HEK293 (cell line): ENCODE measurements at regions of chr9 and their contacts with region 1.

Region 1: DNA sequence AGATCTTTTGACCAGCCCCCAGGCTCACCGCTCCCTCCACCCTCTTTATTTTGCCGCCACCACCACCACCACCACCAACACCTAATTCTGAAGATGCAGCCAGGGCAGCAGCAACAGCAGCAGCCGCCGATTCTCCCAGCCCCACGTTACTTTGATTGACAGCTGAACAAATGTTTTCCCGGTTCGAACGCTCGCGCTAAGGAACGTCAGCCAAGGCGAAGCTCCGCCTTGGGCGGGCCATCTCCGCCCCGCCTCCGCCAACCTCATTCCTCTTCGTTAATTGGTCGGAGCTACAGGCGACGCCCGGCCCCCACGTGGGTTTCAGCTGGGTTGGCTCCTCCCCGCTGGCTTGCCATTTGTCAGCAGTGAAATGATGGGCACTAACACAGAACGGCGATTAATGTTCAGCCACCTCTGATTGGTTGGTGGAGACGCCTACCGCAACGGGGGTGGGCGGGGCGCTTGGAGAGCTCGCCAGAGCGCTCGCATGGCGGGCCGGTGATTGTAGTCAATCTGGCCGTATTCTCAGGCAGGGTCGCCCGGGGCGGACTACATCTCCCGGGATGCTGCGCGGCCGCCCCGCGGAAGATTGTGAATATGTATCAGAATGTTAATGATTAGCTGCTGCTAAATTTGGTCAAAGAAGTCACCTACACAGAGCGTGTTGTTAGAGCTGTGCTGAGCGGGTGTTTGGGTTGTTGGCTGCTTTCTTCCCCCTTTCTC is at the start of gene TLE4:
- H3K4me3 ChIP-seq: peak within 1 kb of the TSS; percentile 93
- H3K27ac ChIP-seq: peak within 1 kb of the TSS; percentile 81
- H3K4me1 ChIP-seq: no peaks in the 10 kb centered on the region
- CTCF ChIP-seq: no peak

Region 2: DNA sequence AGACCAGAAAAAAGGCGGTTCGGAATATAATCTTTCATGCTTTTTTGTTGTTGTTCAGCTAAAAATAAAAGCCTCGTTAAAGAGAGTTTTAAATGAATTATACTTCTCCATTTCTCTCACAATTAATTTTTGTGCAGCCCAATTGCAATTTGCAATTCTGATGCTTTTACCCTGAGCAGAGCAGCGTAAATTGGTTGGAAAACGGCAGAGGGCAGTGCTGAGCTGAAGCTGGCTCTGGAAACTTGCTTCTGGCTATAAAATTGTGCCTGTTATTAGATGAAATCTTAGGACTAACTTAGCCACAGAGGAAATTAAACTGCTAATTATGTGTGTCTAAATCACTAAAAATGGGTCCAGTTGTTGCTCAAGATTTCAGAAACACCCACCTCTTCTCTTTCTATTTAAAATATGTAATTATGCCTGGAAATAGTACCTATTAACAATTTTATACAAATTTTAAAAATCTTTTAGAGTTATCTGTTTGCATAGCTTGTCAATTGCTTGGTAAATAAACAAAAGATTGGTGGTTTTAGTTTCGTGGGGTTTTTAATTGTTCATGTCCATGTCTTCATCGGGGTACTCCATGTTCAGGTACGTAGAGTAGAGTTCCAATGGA is 441.5 kb before region 1 on chr9:
- CTCF ChIA-PET with region 1: interaction called, 5 read pairs
- POLR2A ChIA-PET with region 1: interaction called, 11 read pairs
- H3K4me3 ChIP-seq: no peak overlapping the region
- H3K27ac ChIP-seq: no peak overlapping the region
- H3K4me1 ChIP-seq: no peaks in the 10 kb centered on the region; the same call in 1 of the 2 replicates
- CTCF ChIP-seq: peak; percentile 19; the same call in 1 of the 2 replicates

Region 3: DNA sequence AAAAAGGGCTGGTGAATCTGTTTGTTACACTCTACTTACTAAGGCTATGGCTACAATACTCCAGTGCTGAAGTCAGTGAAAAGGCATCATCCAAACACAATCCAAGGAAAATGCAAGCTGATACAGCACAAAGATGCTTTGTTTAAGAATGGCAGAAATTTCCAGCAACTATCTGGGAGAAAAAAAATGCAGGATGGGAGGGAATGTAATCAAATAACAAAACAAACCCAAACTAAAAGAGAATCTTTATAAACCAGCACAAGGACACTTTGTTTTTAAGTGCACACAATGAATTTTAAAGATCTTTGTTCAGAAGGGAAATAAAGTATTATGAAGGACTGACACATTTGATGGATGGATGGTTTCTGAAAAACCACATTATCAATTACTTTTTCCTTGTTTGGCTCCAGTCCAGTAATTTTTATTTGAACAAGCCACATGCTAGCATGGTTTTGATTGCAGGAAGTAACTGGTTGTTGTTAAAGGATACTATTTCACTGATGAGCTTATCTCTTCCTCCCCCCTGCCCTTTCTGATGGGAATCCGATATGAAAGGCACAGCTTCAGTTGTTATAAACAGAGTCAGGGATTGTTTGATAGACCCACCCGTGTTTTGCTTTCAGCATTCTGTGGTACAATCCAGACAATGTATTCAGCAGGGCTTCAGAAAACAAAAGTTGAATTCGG is 11.8 kb before region 1 on chr9:
- CTCF ChIA-PET with region 1: interaction called, 6 read pairs
- POLR2A ChIA-PET with region 1: interaction called, 38 read pairs
- H3K4me3 ChIP-seq: no peak overlapping the region
- H3K27ac ChIP-seq: no peak overlapping the region
- H3K4me1 ChIP-seq: no peaks in the 10 kb centered on the region
- CTCF ChIP-seq: no peak

Region 4: DNA sequence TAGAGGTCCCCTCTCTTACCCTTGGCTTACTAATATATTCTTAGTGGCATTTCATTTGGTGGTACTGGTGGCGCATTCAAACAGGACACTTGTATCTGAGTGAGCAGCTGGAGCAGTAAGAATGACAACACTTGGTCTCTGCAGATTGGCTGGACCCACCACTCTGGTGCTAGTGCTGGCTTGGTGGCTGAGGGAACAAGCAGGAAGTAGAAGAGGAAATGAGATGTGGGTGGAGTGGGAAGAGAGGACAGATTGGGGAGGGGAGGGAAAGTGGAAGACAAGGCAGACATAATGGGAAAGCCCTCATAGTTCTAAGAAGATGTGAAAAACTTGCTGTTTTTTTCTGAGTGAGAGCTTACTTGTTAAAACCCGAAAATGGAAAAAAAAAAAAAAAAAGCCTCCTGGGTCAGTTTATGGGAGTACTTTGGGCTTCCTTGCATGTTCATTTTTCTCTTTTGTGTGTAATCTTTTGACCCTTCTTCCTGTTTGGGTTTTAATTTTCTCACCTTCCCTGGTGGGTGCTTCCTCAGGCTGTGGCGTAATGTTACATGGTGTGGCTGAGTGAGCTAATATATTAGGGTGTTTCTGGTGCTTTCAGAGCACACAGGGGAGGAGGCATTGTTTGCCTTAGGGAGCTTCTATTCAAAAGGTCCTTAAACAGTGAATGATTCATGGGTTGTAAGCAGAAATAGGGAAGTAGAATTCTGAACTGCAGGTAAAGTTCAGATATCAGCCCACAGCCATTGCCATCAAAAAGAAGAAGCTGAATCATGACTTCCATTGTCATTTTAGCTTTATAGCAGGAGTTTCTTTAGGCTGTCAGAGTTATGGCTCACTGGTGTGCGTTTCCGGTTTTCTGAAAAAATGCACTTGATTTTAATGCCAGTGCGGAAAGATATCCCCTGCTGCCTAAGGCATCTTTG is 52.6 kb after region 1 on chr9:
- CTCF ChIA-PET with region 1: no interaction called
- POLR2A ChIA-PET with region 1: interaction called, 10 read pairs
- H3K4me3 ChIP-seq: no peak overlapping the region
- H3K27ac ChIP-seq: no peak overlapping the region
- H3K4me1 ChIP-seq: no peaks in the 10 kb centered on the region
- CTCF ChIP-seq: no peak

Region 5: GRCh38 chr9:80040457-80040856 is 469.0 kb after region 1 on chr9:
- CTCF ChIA-PET with region 1: no interaction called
- POLR2A ChIA-PET with region 1: interaction called, 10 read pairs
- H3K4me3 ChIP-seq: no peak overlapping the region
- H3K27ac ChIP-seq: no peak overlapping the region
- H3K4me1 ChIP-seq: no peaks in the 10 kb centered on the region
- CTCF ChIP-seq: no peak